Activated T-helper 2 cell treated with anti-CD3 and anti-CD28 coated beads, Interferon-gamma antibody, Interleukin-2, Interleukin-4, amounts not matched to agents 10 μg/mL and 5 μg/mL and 100 μg/mL, durations not matched to agents 14 hours and 24 hours and 36 hours (primary cell): ENCODE measurements at regions of chr20 and their contacts with region 1.

Region 1: DNA sequence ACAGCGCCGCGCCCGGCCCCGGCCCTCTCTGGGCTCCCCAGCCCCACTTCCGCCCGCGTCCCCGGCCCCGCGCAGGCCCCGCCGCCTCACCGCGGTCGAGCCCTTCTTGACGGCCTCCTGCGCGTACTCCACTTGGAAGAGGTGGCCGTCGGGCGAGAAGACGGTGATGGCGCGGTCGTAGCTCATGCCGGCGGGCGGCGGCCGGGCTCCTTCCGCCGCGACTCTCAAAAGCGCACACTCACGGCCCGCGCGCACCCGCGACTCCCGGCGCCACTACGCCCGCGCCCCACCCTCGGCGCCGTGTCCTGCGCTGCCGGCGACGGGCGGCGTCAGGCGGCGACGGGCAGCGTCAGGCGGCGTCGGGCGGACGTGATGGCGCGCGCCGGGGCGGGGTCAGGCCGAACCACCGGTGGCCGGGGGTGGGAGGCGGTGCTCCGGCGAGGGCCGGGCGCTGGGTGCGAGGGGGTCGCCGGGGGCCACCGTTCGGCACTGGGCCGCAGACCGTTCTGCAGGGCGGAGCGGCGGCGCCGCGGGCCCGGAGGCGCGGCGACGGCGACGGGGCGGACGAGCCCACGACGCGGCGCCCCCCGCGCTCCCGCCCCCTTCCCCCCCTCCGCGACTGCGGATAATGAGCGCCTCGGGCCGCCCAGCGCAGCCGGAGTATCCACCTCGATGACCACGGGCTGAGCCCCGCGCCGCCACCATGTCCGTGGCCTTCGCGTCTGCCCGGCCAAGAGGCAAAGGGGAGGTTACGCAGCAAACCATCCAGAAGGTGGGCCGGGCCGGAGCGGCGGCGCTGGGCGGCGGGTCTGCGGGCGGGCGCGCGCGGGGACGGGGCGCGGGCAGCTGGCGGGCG is at the starts of genes PSMA7 and SS18L1:
- DNase-seq: peak; percentile 84
- H3K4me3 Mint-ChIP-seq: peak within 1 kb of the TSS; percentile 92
- H3K27ac Mint-ChIP-seq: peak within 1 kb of the TSS; percentile 90
- H3K4me1 Mint-ChIP-seq: peaks cover 38% of the 10 kb centered on the region
- H3K27me3 Mint-ChIP-seq: no peaks in the 10 kb centered on the region
- total RNA-seq, gene PSMA7: 405 and 434 TPM in 2 replicates
- total RNA-seq, gene SS18L1: 26.0 and 30.7 TPM in 2 replicates

Region 2: DNA sequence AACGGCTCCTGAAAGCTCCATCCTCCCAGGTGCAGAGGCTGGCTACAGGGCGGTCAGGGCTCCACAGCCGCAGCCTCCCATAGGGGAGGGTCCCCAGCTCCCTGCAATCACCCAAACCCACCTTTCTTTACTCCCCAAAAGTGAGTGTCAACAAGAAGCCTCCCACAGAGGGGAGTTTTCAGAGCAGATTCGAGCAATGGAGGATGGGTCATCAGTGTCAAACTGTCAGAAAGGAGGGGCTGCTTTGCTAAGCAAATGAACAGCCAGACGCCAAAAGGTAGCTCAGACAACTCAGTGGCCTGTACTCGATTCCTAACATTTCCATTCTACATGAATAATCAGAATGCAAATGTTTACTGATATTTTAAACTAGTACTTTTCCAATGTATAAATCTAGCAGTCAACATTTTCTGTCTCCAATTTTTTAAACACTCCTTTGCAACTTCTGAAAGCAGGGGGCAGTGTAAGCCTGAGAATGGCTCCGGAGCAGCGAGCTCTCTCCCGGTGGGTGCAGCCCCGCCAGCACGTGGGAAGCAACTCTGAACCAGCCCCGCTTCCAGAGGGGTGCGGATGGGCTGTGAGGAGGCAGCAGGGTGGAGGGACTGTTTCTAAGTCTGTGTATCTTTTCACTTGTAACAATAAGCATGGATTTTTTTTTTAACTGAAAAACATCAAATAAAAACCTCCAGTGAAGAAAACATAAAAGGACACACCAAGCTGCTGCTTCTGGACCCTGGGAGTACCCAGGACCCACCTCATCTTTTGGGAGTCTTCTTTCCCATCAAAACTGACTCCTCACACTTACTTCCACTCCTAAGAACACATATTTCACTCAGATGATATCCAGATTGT is 132.6 kb before region 1 on chr20:
- intact Hi-C with region 1: loop called (anchors 5 kb)
- DNase-seq: peak; percentile 26
- H3K4me3 Mint-ChIP-seq: no peak overlapping the region
- H3K27ac Mint-ChIP-seq: no peak overlapping the region
- H3K4me1 Mint-ChIP-seq: peaks cover 3% of the 10 kb centered on the region
- H3K27me3 Mint-ChIP-seq: no peaks in the 10 kb centered on the region

Region 3: GRCh38 chr20:62065669-62066338 is 77.5 kb before region 1 on chr20 and contains the start of gene TAF4:
- intact Hi-C with region 1: loop called (anchors 2 kb)
- DNase-seq: peak; percentile 80
- H3K4me3 Mint-ChIP-seq: peak within 1 kb of the TSS; percentile 79
- H3K27ac Mint-ChIP-seq: peak within 1 kb of the TSS; percentile 80
- H3K4me1 Mint-ChIP-seq: peaks cover 32% of the 10 kb centered on the region
- H3K27me3 Mint-ChIP-seq: peaks cover 8% of the 10 kb centered on the region
- total RNA-seq, gene TAF4: 23.6 and 26.9 TPM in 2 replicates

Region 4: DNA sequence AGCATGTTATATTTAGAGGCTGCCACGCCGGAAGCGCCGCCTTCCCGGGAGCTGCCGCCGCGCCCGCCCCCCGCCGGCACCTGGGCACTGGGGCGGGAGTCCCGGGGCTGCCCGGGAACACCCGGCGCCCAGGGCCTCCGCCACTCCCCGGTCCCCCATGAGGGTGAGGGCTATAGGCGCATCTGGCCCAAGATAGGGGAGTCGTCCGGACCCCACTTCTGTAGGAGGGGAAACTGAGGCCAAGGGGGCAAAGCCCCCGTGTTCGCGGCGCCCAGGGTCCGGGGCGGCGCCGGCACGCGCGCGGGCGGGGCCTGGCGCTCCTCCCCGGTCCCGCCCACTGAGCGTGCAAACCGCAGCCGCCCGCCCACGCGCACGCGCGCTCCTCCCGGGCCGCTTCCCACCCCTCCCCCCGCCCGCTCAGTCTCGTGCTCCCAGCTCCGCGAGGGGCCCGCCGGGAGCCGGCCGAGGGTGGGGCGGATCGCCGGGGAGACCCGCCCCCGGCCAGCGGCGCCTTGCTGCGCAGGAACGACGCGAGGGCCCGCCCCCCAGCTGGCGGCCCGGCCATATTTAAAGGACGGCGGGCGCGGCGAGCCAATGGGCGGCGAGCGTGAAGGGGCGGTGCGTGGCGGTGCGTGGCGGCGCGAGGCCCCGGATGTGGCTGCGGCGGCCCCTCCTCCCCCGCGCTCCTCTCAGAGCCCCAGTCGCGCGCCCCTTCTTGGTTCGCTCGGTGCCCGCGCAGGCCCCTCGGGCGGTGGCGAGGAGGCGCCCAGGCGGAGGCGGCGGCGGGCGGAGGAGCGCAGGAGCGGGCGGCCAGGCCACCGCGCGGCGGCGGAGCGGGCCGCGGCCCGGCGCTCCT is 21.3 kb before region 1 on chr20 and contains the start of gene LSM14B:
- intact Hi-C with region 1: loop called (anchors 1 kb)
- DNase-seq: peak; percentile 94
- H3K4me3 Mint-ChIP-seq: peak within 1 kb of the TSS; percentile 86
- H3K27ac Mint-ChIP-seq: peak within 1 kb of the TSS; percentile 88
- H3K4me1 Mint-ChIP-seq: peaks cover 30% of the 10 kb centered on the region
- H3K27me3 Mint-ChIP-seq: no peaks in the 10 kb centered on the region
- total RNA-seq, gene LSM14B: 42.9 and 45.0 TPM in 2 replicates

Region 5: DNA sequence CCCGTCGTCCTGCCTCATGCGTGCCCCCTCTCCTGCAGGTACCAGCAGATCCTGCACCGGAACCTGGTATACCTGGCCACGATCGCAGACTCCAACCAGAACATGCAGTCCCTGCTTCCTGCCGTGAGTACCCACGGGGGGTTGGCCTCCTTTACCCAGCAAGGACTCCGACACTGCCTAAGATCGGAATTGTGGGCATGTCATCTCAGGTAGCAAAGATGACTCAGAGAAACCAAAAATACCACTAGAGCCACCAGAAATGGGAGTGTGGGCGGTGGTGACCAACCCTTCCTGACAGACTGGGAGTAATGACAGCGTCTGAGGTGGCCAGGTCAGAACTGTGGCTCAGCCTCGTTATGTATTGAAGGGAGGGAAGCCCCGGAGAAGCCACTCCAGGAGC is 16.5 kb after region 1 on chr20:
- intact Hi-C with region 1: loop called (anchors 2 kb)
- DNase-seq: peak; percentile 24
- H3K4me3 Mint-ChIP-seq: peak overlapping the region; percentile 30
- H3K27ac Mint-ChIP-seq: peak overlapping the region; percentile 35
- H3K4me1 Mint-ChIP-seq: peaks cover 10% of the 10 kb centered on the region
- H3K27me3 Mint-ChIP-seq: no peaks in the 10 kb centered on the region

Region 6: GRCh38 chr20:62182613-62183425 is 39.5 kb after region 1 on chr20 and contains the start of gene MTG2:
- intact Hi-C with region 1: loop called (anchors 1 kb)
- DNase-seq: peak; percentile 93
- H3K4me3 Mint-ChIP-seq: peak within 1 kb of the TSS; percentile 91
- H3K27ac Mint-ChIP-seq: peak within 1 kb of the TSS; percentile 89
- H3K4me1 Mint-ChIP-seq: peaks cover 24% of the 10 kb centered on the region
- H3K27me3 Mint-ChIP-seq: no peaks in the 10 kb centered on the region
- total RNA-seq, gene MTG2: 34.0 and 40.2 TPM in 2 replicates